Activated CD4-positive, alpha-beta memory T cell treated with anti-CD3 and anti-CD28 coated beads, Interleukin-2, amount 10 ng/mL, durations not matched to agents 7 days and 5 days (primary cell): ENCODE measurements at regions of chr12 and their contacts with region 1.

Region 1: GRCh38 chr12:108950991-108951739 is 69.7 kb downstream of the SVOP start:
- DNase-seq: peak; percentile 78
- H3K4me3 Mint-ChIP-seq: no peak overlapping the region
- H3K27ac Mint-ChIP-seq: no peak overlapping the region
- H3K4me1 Mint-ChIP-seq: peaks cover 7% of the 10 kb centered on the region
- H3K27me3 Mint-ChIP-seq: peaks cover 21% of the 10 kb centered on the region

Region 2: GRCh38 chr12:108482717-108483212 is 468.4 kb before region 1 on chr12:
- CTCF ChIA-PET with region 1: no interaction called
- POLR2A ChIA-PET with region 1: no interaction called
- DNase-seq: no peak
- H3K4me3 Mint-ChIP-seq: no peak overlapping the region
- H3K27ac Mint-ChIP-seq: no peak overlapping the region
- H3K4me1 Mint-ChIP-seq: no peaks in the 10 kb centered on the region
- H3K27me3 Mint-ChIP-seq: peaks cover 1% of the 10 kb centered on the region

Region 3: GRCh38 chr12:108803428-108804105 is 147.6 kb before region 1 on chr12:
- CTCF ChIA-PET with region 1: interaction called, 15 read pairs
- POLR2A ChIA-PET with region 1: interaction called, 3 read pairs
- DNase-seq: peak; percentile 70
- H3K4me3 Mint-ChIP-seq: no peak overlapping the region
- H3K27ac Mint-ChIP-seq: peak overlapping the region; percentile 41
- H3K4me1 Mint-ChIP-seq: peaks cover 10% of the 10 kb centered on the region
- H3K27me3 Mint-ChIP-seq: no peaks in the 10 kb centered on the region

Region 4: GRCh38 chr12:108863936-108864335 is 87.2 kb before region 1 on chr12:
- CTCF ChIA-PET with region 1: no interaction called
- POLR2A ChIA-PET with region 1: no interaction called
- DNase-seq: no peak
- H3K4me3 Mint-ChIP-seq: no peak overlapping the region
- H3K27ac Mint-ChIP-seq: no peak overlapping the region
- H3K4me1 Mint-ChIP-seq: peaks cover 27% of the 10 kb centered on the region
- H3K27me3 Mint-ChIP-seq: peaks cover 2% of the 10 kb centered on the region

Region 5: GRCh38 chr12:108884116-108885012 is 66.8 kb before region 1 on chr12:
- CTCF ChIA-PET with region 1: interaction called, 25 read pairs
- POLR2A ChIA-PET with region 1: no interaction called
- DNase-seq: peak; percentile 72
- H3K4me3 Mint-ChIP-seq: no peak overlapping the region
- H3K27ac Mint-ChIP-seq: no peak overlapping the region
- H3K4me1 Mint-ChIP-seq: peaks cover 5% of the 10 kb centered on the region
- H3K27me3 Mint-ChIP-seq: peaks cover 3% of the 10 kb centered on the region

Region 6: GRCh38 chr12:109033234-109034196 is 82.3 kb after region 1 on chr12:
- CTCF ChIA-PET with region 1: no interaction called
- POLR2A ChIA-PET with region 1: no interaction called
- DNase-seq: no peak
- H3K4me3 Mint-ChIP-seq: no peak overlapping the region
- H3K27ac Mint-ChIP-seq: no peak overlapping the region
- H3K4me1 Mint-ChIP-seq: no peaks in the 10 kb centered on the region
- H3K27me3 Mint-ChIP-seq: peaks cover 21% of the 10 kb centered on the region